Calu3 (cell line): ENCODE measurements at regions of chr10 and their contacts with region 1.

Region 1: GRCh38 chr10:32207544-32207943 is 139.4 kb downstream of the EPC1 start:
- DNase-seq: peak; percentile 80
- H3K4me3 Mint-ChIP-seq: no peak overlapping the region
- H3K27ac Mint-ChIP-seq: no peak overlapping the region
- H3K4me1 Mint-ChIP-seq: peaks cover 16% of the 10 kb centered on the region
- H3K27me3 Mint-ChIP-seq: no peaks in the 10 kb centered on the region
- CTCF ChIP-seq: peak; percentile 80

Region 2: DNA sequence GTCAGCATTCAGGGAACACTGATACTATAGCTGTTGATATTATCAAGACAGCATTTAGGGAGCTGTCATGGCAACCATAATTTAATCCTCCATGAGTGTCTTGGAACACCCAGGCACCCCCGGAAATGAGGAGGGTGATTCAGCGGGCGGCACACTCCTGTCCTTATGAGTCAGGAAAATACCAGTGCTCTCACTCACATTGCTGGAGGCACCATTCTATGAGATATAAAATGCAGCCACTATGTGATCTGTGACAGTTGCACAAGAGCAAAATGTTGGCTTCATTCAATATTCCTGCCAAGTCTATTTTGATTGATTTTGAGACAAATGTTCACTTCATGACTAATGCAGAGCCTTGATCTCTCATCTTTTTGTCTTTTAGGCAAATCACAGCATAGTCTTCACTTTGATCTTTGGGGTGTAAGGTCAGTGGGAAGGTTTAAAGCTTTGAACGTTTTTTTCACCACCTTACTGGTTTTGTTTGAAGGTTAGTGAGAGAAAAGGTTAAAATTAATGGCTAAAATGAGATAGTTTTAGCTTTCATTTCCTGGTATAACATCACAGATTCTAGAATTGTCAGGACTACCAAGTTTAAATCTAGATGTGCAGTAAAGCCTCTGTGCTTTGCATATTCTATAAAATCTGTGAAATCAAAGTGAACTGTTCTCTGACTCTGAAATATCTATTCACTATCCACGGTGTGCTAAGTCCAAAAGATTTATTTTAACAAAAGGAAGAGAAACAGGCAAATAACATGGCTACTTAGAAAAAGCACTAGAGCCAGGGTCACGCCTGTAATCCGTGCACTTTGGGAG is 266.5 kb before region 1 on chr10:
- CTCF ChIA-PET with region 1: no interaction called
- intact Hi-C with region 1: no loop called
- DNase-seq: peak; percentile 91
- H3K4me3 Mint-ChIP-seq: peak overlapping the region; percentile 30
- H3K27ac Mint-ChIP-seq: peak overlapping the region; percentile 82
- H3K4me1 Mint-ChIP-seq: peaks cover 56% of the 10 kb centered on the region
- H3K27me3 Mint-ChIP-seq: no peaks in the 10 kb centered on the region
- CTCF ChIP-seq: no peak

Region 3: GRCh38 chr10:32055813-32056600 is 151.5 kb before region 1 on chr10 and contains the start of gene KIF5B:
- CTCF ChIA-PET with region 1: no interaction called
- intact Hi-C with region 1: loop called (anchors 5 kb)
- DNase-seq: peak; percentile 94
- H3K4me3 Mint-ChIP-seq: peak within 1 kb of the TSS; percentile 98
- H3K27ac Mint-ChIP-seq: peak within 1 kb of the TSS; percentile 75
- H3K4me1 Mint-ChIP-seq: peaks cover 8% of the 10 kb centered on the region
- H3K27me3 Mint-ChIP-seq: no peaks in the 10 kb centered on the region
- CTCF ChIP-seq: no peak
- total RNA-seq, gene KIF5B: 106 and 108 TPM in 2 replicates

Region 4: DNA sequence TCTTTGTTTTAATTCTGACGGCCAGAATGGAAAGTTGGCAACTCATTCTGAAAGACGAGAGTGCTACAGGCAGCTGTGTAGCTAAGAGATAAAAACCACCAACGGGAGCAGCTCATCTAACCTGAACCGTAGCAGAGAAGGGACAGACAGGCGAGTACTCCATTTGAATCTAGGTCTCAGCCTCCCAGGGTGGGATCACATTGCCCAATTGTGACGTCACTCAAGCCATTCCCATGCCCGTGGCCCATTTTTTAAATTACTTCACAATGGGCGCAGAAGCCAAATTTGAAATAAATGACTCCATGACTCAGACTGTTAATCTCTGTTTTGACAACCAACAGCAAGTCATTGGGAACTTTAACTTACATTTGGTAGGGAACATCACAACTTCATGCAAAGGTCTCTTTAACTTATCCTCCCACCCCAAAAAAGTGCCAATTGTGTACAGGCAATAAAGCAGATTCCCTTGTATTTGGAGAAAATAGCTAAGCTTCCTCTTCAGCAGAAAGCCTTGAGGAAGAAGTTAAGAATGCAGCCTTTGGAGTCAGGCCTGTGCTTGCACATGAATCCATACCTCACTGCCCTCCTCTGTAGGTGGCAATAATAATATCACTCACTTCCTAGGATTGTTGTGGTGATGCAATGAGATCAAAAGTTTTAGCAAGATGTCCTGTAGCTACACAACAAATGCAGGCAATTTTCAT is 58.1 kb before region 1 on chr10:
- CTCF ChIA-PET with region 1: no interaction called
- intact Hi-C with region 1: loop called (anchors 10 kb)
- DNase-seq: no peak
- H3K4me3 Mint-ChIP-seq: no peak overlapping the region
- H3K27ac Mint-ChIP-seq: no peak overlapping the region
- H3K4me1 Mint-ChIP-seq: peaks cover 11% of the 10 kb centered on the region
- H3K27me3 Mint-ChIP-seq: no peaks in the 10 kb centered on the region
- CTCF ChIP-seq: no peak

Region 5: GRCh38 chr10:32163071-32163761 is 44.3 kb before region 1 on chr10:
- CTCF ChIA-PET with region 1: no interaction called
- intact Hi-C with region 1: no loop called
- DNase-seq: no peak
- H3K4me3 Mint-ChIP-seq: no peak overlapping the region
- H3K27ac Mint-ChIP-seq: no peak overlapping the region
- H3K4me1 Mint-ChIP-seq: no peaks in the 10 kb centered on the region
- H3K27me3 Mint-ChIP-seq: no peaks in the 10 kb centered on the region
- CTCF ChIP-seq: no peak

Region 6: DNA sequence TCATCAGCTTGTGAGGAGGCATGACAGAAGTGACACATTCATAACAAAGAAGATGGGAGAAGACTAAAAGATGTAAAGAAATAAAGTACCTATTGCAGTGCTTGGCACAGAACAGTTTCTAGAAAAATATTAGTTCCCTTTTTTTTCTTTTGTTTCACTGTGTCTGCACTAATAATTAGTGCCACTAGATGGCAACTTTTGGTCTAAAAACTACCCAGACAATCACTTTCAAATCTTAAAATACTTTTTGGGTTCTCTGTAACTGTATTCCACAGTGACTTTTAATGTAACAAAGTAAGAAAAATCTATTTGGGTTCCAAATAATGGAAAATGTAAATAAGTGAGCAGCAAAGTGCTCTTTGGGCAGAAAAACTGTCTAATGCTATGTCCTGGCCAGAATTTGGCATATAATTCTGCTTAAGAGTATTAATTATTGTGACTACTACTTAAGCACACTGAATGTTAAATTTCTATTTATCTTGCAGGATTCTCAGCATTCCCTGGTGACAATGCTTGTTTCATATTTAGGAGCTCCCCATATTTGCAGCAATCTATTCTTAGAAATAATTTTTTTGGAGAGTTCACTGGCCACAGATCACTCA is 16.6 kb before region 1 on chr10:
- CTCF ChIA-PET with region 1: interaction called, 16 read pairs
- intact Hi-C with region 1: loop called (anchors 1 kb)
- DNase-seq: no peak
- H3K4me3 Mint-ChIP-seq: no peak overlapping the region
- H3K27ac Mint-ChIP-seq: no peak overlapping the region
- H3K4me1 Mint-ChIP-seq: peaks cover 17% of the 10 kb centered on the region
- H3K27me3 Mint-ChIP-seq: no peaks in the 10 kb centered on the region
- CTCF ChIP-seq: peak; percentile 47

Region 7: GRCh38 chr10:32367793-32368453 is 160.4 kb after region 1 on chr10:
- CTCF ChIA-PET with region 1: no interaction called
- intact Hi-C with region 1: loop called (anchors 2 kb)
- DNase-seq: peak; percentile 71
- H3K4me3 Mint-ChIP-seq: no peak overlapping the region
- H3K27ac Mint-ChIP-seq: no peak overlapping the region
- H3K4me1 Mint-ChIP-seq: peaks cover 22% of the 10 kb centered on the region
- H3K27me3 Mint-ChIP-seq: no peaks in the 10 kb centered on the region
- CTCF ChIP-seq: peak; percentile 74